Dendritic cell treated with granulocyte-macrophage colony-stimulating factor and Interleukin-4, amounts not matched to agents 40 ng/mL and 50 ng/mL, for 4 days (primary cell): ENCODE measurements at regions of chr2 and their contacts with region 1.

Region 1: GRCh38 chr2:177164584-177165052 is 48.0 kb upstream of the HNRNPA3 start:
- H3K4me3 Mint-ChIP-seq: no peak overlapping the region
- H3K27ac Mint-ChIP-seq: no peak overlapping the region
- H3K4me1 Mint-ChIP-seq: peaks cover 12% of the 10 kb centered on the region
- H3K27me3 Mint-ChIP-seq: no peaks in the 10 kb centered on the region

Region 2: GRCh38 chr2:175539122-175539521 is 1625.5 kb before region 1 on chr2:
- intact Hi-C with region 1: no loop called
- H3K4me3 Mint-ChIP-seq: no peak overlapping the region
- H3K27ac Mint-ChIP-seq: no peak overlapping the region
- H3K4me1 Mint-ChIP-seq: peaks cover 9% of the 10 kb centered on the region
- H3K27me3 Mint-ChIP-seq: no peaks in the 10 kb centered on the region

Region 3: GRCh38 chr2:176126929-176127773 is 1037.5 kb before region 1 on chr2:
- intact Hi-C with region 1: loop called (anchors 5 kb)
- H3K4me3 Mint-ChIP-seq: no peak overlapping the region
- H3K27ac Mint-ChIP-seq: no peak overlapping the region
- H3K4me1 Mint-ChIP-seq: peaks cover 46% of the 10 kb centered on the region
- H3K27me3 Mint-ChIP-seq: peaks cover 85% of the 10 kb centered on the region

Region 4: GRCh38 chr2:177078416-177078815 is 86.2 kb before region 1 on chr2:
- intact Hi-C with region 1: no loop called
- H3K4me3 Mint-ChIP-seq: no peak overlapping the region
- H3K27ac Mint-ChIP-seq: no peak overlapping the region
- H3K4me1 Mint-ChIP-seq: no peaks in the 10 kb centered on the region
- H3K27me3 Mint-ChIP-seq: no peaks in the 10 kb centered on the region

Region 5: DNA sequence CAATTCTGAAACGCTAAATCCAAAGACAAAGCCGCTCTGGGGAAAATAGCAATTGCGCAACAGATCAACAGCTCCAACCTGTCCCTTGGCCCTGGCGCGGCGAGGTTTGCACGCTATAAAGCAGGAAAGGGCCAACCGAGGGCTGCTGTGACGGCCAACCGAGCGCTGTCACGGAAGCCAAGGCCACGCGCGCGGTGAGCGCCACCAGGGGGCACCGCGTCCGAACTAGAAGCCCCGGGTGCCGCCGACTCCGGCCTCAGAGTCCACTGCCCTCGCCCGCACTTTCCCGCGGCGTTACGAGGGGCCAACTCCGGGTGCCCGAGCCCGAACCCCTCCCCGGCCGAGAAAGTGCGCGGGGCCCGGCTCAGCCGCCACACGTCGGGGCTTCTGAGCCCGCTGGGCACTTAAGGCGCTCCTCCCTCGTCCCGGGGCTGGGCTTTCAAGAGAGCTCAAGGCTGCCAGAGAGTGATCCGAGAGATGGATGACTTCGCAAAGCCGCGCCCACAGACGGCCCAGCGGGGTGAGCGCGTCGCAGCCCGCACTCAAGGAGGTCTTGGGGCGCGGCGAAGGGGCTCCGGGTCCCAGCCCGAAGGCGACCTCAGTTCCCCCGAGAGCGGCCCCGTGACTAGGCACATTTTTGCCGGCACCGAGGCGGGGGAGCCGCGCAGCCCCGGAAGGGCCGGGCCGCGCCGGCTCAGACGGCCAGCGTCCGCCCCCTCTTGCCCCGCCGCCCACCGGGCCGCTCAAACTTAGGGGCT is 99.0 kb after region 1 on chr2:
- intact Hi-C with region 1: loop called (anchors 1 kb)
- H3K4me3 Mint-ChIP-seq: peak overlapping the region; percentile 88
- H3K27ac Mint-ChIP-seq: peak overlapping the region; percentile 100
- H3K4me1 Mint-ChIP-seq: peaks cover 19% of the 10 kb centered on the region
- H3K27me3 Mint-ChIP-seq: no peaks in the 10 kb centered on the region

Region 6: GRCh38 chr2:177332041-177332991 is 167.7 kb after region 1 on chr2:
- intact Hi-C with region 1: loop called (anchors 1 kb)
- H3K4me3 Mint-ChIP-seq: no peak overlapping the region
- H3K27ac Mint-ChIP-seq: peak overlapping the region; percentile 32
- H3K4me1 Mint-ChIP-seq: peaks cover 30% of the 10 kb centered on the region
- H3K27me3 Mint-ChIP-seq: no peaks in the 10 kb centered on the region

Region 7: DNA sequence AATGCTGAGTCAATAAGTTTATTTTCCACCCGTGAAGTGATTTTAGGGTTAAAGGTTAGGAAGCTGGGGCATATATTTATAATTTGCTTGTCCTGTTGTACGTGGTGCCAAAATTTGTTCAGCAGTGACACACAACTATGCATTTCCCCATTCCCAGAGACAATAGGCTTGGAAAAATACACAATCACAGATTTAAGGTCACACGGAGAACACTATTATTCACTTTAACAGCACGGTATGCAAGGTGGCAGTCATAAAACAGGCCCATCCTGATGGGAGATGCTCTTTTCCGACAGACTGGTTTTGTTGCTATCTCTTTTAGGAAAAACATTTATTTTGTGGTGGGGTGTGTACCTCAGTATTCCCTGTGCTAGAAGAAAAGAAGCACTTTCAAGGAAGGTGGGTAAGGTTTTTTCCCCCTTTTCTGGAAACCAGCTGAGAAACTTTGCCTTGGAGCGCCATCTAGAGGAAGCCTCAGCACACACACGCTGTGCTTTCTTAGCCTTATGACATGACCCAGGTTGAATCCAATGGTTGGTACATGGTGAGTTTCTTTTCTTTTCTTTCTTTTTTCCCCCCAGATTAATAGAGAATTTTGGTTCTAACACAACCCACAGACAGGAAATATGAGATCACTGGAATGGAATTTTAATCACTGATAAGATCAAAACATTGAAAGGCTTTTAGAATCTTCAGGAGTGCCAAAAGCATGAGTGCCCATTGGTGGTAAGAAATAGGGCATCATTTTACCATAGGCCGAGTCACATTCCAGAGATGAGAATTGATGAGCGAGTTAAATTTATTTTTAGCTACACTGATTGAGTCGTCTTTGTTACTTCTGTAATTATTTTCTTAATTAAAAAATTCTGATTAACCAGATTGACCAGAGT is 560.0 kb after region 1 on chr2:
- intact Hi-C with region 1: loop called (anchors 10 kb)
- H3K4me3 Mint-ChIP-seq: no peak overlapping the region
- H3K27ac Mint-ChIP-seq: no peak overlapping the region
- H3K4me1 Mint-ChIP-seq: no peaks in the 10 kb centered on the region
- H3K27me3 Mint-ChIP-seq: peaks cover 2% of the 10 kb centered on the region